Caco-2 (cell line): ENCODE measurements at regions of chr5 and their contacts with region 1.

Region 1: DNA sequence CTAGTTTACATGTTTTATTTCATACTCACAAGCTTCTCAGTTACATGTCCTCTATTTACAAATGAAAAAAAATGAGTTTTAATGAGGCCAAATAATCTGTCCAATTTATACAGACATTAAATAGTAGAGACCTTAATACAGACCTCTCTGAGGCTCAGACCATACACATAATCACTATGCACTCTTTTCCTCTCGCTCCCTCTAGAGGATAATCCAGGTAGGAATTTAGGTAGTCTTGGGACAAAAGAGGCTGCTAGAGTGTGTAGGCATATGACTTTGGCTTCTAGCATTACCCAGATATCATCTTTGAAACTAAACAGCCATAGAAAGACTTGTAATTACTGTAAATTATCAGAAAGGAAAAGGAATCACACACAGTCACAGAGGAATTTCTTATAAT is 444.7 kb downstream of the HINT1 start:
- DNase-seq: peak in 1 of 2 experiments; percentile 56
- H3K4me3 ChIP-seq: no peak overlapping the region
- H3K4me3 Mint-ChIP-seq: no peak overlapping the region
- H3K27ac Mint-ChIP-seq: no peak overlapping the region
- H3K4me1 ChIP-seq: no peaks in the 10 kb centered on the region
- H3K4me1 Mint-ChIP-seq: no peaks in the 10 kb centered on the region
- H3K27me3 ChIP-seq: no peaks in the 10 kb centered on the region
- H3K27me3 Mint-ChIP-seq: no peaks in the 10 kb centered on the region
- CTCF ChIP-seq: peak; percentile 64 to 80

Region 2: DNA sequence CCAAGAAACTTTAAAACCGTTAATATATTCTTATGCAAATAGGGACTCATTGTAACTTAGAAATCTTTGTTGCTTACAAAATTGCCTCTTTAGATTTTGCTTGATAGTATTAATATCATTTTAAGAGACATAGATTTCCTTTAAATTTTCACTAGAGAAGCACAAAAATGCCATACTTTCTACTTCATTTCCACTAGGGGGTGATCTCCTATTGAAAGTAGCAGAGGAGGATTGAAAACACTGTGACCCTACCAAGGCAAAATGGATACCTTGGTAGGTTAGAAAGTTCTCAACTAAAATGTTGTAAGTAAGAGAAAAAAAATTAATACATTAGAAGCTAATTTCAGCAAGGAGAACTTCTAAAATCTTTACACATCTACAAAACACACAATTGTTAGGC is 611.2 kb before region 1 on chr5:
- CTCF ChIA-PET with region 1: no interaction called
- POLR2A ChIA-PET with region 1: no interaction called
- intact Hi-C with region 1: loop called (anchors 1 kb)
- DNase-seq: peak in 1 of 2 experiments; percentile 16
- H3K4me3 ChIP-seq: no peak overlapping the region
- H3K4me3 Mint-ChIP-seq: no peak overlapping the region
- H3K27ac Mint-ChIP-seq: no peak overlapping the region
- H3K4me1 ChIP-seq: no peaks in the 10 kb centered on the region
- H3K4me1 Mint-ChIP-seq: no peaks in the 10 kb centered on the region
- H3K27me3 ChIP-seq: no peaks in the 10 kb centered on the region
- H3K27me3 Mint-ChIP-seq: no peaks in the 10 kb centered on the region
- CTCF ChIP-seq: peak; percentile 60 to 72

Region 3: DNA sequence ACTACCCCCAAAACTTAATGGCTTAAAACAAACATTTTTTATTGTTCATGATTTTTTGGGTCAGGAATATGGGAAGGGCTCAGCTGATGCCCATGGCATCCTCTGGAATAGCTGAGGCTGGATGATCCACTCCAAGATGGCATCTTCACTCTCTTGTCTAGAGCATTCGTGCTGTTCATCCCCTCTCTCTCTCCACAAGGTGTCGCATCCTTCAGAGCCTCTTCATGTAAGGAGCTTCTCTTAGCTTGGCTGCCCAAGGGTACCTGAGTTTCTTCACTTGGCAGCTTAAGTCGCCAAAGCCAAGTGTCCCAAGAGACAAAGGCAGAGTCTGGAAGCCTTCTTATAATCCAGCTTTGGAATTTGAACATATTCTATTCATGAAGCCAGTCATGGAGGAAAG is 521.4 kb before region 1 on chr5:
- CTCF ChIA-PET with region 1: no interaction called
- POLR2A ChIA-PET with region 1: no interaction called
- intact Hi-C with region 1: loop called (anchors 2 kb)
- DNase-seq: peak; percentile 14 to 44
- H3K4me3 ChIP-seq: no peak overlapping the region
- H3K4me3 Mint-ChIP-seq: no peak overlapping the region
- H3K27ac Mint-ChIP-seq: no peak overlapping the region
- H3K4me1 ChIP-seq: no peaks in the 10 kb centered on the region
- H3K4me1 Mint-ChIP-seq: no peaks in the 10 kb centered on the region
- H3K27me3 ChIP-seq: no peaks in the 10 kb centered on the region
- H3K27me3 Mint-ChIP-seq: no peaks in the 10 kb centered on the region
- CTCF ChIP-seq: peak in 1 of 2 experiments; percentile 37

Region 4: GRCh38 chr5:130555427-130555826 is 164.9 kb before region 1 on chr5:
- CTCF ChIA-PET with region 1: no interaction called
- POLR2A ChIA-PET with region 1: no interaction called
- intact Hi-C with region 1: loop called (anchors 1 kb)
- DNase-seq: peak; percentile 5 to 35
- H3K4me3 ChIP-seq: no peak overlapping the region
- H3K4me3 Mint-ChIP-seq: no peak overlapping the region
- H3K27ac Mint-ChIP-seq: no peak overlapping the region
- H3K4me1 ChIP-seq: no peaks in the 10 kb centered on the region
- H3K4me1 Mint-ChIP-seq: no peaks in the 10 kb centered on the region
- H3K27me3 ChIP-seq: no peaks in the 10 kb centered on the region
- H3K27me3 Mint-ChIP-seq: no peaks in the 10 kb centered on the region
- CTCF ChIP-seq: peak in 1 of 2 experiments; percentile 24

Region 5: GRCh38 chr5:131005963-131006684 is 285.8 kb after region 1 on chr5:
- CTCF ChIA-PET with region 1: no interaction called
- POLR2A ChIA-PET with region 1: no interaction called
- intact Hi-C with region 1: loop called (anchors 5 kb)
- DNase-seq: peak in 1 of 2 experiments; percentile 17
- H3K4me3 ChIP-seq: no peak overlapping the region
- H3K4me3 Mint-ChIP-seq: no peak overlapping the region
- H3K27ac Mint-ChIP-seq: no peak overlapping the region
- H3K4me1 ChIP-seq: no peaks in the 10 kb centered on the region
- H3K4me1 Mint-ChIP-seq: no peaks in the 10 kb centered on the region
- H3K27me3 ChIP-seq: no peaks in the 10 kb centered on the region
- H3K27me3 Mint-ChIP-seq: peaks cover 10% of the 10 kb centered on the region
- CTCF ChIP-seq: peak; percentile 27 to 32